ENCODE measurements at regions of chrX and their contacts with region 1.

Region 1: GRCh38 chrX:54927409-54927808 is 6.8 kb downstream of the TRO start:
- DNase-seq: peak; percentile 6
- CTCF ChIP-seq: no peak

Region 2: GRCh38 chrX:55025870-55026542 is 98.6 kb after region 1 on chrX:
- in situ Hi-C with region 1: loop called (anchors 25 kb)
- DNase-seq: no peak
- CTCF ChIP-seq: no peak

Measured in GM13977 (cell line).